Sigmoid colon (tissue), 7 donors: ENCODE measurements at regions of chr10 and their contacts with region 1.

Region 1: GRCh38 chr10:113854011-113854760 is at the starts of genes DCLRE1A and NHLRC2:
- DNase-seq: peak; percentile 89
- H3K4me3 ChIP-seq: peak within 1 kb of the TSS; percentile 64 to 84 (median 76)
- H3K27ac ChIP-seq: peak within 1 kb of the TSS; percentile 84 to 91 (median 88)
- H3K4me1 ChIP-seq: peaks cover 0 to 69% (median 42%) of the 10 kb centered on the region in 4 donors
- H3K27me3 ChIP-seq: no peaks in the 10 kb centered on the region
- CTCF ChIP-seq: no peak
- EP300 ChIP-seq: no peak
- POLR2A ChIP-seq: peak in 1 of 2 donors; percentile 5
- total RNA-seq, gene DCLRE1A: 4.8 to 7.5 (median 4.9) TPM
- total RNA-seq, gene NHLRC2: 31.0 to 67.8 (median 41.3) TPM

Region 2: DNA sequence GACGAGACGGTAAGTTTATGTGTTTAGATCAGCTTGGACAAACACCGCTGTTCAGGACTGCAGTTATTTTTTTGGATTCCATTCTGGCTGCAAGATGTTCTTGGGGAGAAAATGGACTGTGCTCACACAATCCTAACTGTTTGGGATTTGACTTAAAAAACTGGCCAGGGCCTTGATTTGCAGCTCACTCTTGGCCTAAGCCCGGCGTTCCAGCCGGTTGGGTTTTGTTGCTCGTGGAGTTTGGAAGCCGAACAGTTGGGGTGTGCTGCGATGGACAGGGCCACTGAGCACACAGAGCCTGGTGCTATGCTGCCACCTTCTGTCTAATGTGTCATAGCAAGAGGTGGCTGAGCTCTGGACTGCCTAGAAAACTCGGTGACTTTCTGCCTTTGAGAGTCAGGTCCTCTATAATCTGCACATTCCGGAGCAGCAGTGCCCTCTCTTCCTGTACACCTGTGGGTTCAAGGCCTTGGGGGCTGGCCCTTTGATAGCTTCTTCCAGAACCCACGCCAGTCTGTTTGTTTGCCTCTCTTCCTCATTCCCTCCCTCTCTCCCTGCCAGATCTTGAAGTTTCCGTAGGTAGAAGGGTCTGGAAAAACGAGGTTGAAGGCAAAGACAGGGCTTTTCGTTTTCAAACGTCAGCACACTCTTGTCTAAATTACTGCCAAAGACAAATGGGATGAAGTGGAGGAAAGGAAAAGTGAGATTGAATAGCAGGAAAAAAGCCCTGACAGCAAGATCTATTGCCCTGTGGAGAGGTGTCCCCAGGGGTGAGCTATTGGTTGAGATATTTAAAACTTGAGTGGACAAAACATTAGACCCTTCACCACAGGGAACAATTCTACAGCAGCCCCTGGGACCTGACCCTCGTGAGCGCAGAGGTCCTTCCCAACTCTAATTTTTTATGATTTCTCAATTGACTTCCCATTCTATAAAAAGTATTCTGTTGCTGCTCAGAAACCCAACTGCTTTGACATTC is 468.9 kb before region 1 on chr10:
- intact Hi-C with region 1: no loop called
- DNase-seq: peak; percentile 96
- H3K4me3 ChIP-seq: no peak overlapping the region
- H3K27ac ChIP-seq: peak overlapping the region; percentile 11 to 54 (median 42)
- H3K4me1 ChIP-seq: peaks cover 0 to 56% (median 34%) of the 10 kb centered on the region in 4 donors
- H3K27me3 ChIP-seq: no peaks in the 10 kb centered on the region
- CTCF ChIP-seq: peak; percentile 74 to 83 (median 80)
- EP300 ChIP-seq: no peak
- POLR2A ChIP-seq: no peak

Region 3: DNA sequence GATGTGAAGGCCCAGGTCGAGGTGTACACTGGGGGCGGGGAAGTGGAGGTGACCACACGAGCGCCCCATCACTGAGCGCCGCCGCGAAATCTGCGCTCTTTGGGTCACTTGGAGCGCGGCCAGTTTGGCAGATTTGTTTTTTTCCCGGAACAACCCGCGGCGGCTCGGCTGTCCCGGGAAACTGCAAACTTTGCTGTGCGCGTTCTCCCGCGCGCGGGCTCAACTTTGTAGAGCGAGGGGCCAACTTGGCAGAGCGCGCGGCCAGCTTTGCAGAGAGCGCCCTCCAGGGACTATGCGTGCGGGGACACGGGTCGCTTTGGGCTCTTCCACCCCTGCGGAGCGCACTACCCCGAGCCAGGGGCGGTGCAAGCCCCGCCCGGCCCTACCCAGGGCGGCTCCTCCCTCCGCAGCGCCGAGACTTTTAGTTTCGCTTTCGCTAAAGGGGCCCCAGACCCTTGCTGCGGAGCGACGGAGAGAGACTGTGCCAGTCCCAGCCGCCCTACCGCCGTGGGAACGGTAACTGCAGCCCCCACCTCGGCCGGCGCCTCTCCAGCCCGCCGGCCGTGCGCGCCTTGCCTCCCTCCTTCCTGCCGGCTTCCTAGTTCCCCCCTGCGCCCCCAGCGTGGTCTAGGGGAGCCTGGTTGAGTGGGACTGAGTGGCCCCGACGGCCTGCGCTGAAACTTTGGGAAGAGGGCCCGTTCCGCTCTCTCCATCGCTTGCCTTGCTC is 174.6 kb before region 1 on chr10 and contains the start of gene CASP7:
- intact Hi-C with region 1: loop called (anchors 5 kb)
- DNase-seq: peak; percentile 90
- H3K4me3 ChIP-seq: peak within 1 kb of the TSS; percentile 83 to 99 (median 94)
- H3K27ac ChIP-seq: peak within 1 kb of the TSS; percentile 96 to 98 (median 96)
- H3K4me1 ChIP-seq: peaks cover 2 to 22% (median 17%) of the 10 kb centered on the region in 4 donors
- H3K27me3 ChIP-seq: no peaks in the 10 kb centered on the region
- CTCF ChIP-seq: no peak
- EP300 ChIP-seq: no peak
- POLR2A ChIP-seq: peak; percentile 7 to 44
- total RNA-seq, gene CASP7: 11.4 to 17.8 (median 14.5) TPM

Region 4: GRCh38 chr10:113704637-113705343 is 149.4 kb before region 1 on chr10:
- intact Hi-C with region 1: loop called (anchors 5 kb)
- DNase-seq: no peak
- H3K4me3 ChIP-seq: no peak overlapping the region
- H3K27ac ChIP-seq: no peak overlapping the region
- H3K4me1 ChIP-seq: peaks cover 0 to 37% (median 26%) of the 10 kb centered on the region in 4 donors
- H3K27me3 ChIP-seq: no peaks in the 10 kb centered on the region
- CTCF ChIP-seq: peak in 3 of 4 experiments; percentile 55 to 63 (median 58)
- EP300 ChIP-seq: no peak
- POLR2A ChIP-seq: no peak

Region 5: DNA sequence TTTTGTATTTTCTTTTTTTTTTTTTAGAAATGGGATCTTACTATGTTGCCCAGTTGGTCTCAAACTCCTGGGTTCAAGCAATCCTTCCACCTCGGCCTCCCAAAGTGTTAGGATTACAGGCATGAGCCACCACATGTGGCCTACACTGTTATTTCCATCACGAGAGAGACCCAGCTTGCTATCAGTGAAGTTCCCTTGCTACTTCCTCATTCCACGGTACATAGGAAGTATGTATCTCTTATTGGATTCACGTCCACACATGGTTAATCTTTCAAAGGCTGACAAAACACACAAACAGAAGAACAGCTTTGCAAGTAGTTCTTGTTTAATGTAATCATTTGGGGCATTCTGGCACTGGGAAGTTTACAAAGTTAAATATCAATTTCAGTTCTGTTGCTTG is 51.2 kb before region 1 on chr10:
- intact Hi-C with region 1: loop called (anchors 2 kb)
- DNase-seq: no peak
- H3K4me3 ChIP-seq: no peak overlapping the region
- H3K27ac ChIP-seq: peak overlapping the region in 1 of 4 donors; percentile 29
- H3K4me1 ChIP-seq: peaks cover 0 to 25% (median 13%) of the 10 kb centered on the region in 4 donors
- H3K27me3 ChIP-seq: no peaks in the 10 kb centered on the region
- CTCF ChIP-seq: no peak
- EP300 ChIP-seq: no peak
- POLR2A ChIP-seq: no peak

Region 6: GRCh38 chr10:113897693-113898618 is 43.8 kb after region 1 on chr10:
- intact Hi-C with region 1: no loop called
- DNase-seq: no peak
- H3K4me3 ChIP-seq: no peak overlapping the region
- H3K27ac ChIP-seq: no peak overlapping the region
- H3K4me1 ChIP-seq: peaks cover 0 to 9% (median 2%) of the 10 kb centered on the region in 4 donors
- H3K27me3 ChIP-seq: no peaks in the 10 kb centered on the region
- CTCF ChIP-seq: no peak
- EP300 ChIP-seq: no peak
- POLR2A ChIP-seq: no peak

Region 7: DNA sequence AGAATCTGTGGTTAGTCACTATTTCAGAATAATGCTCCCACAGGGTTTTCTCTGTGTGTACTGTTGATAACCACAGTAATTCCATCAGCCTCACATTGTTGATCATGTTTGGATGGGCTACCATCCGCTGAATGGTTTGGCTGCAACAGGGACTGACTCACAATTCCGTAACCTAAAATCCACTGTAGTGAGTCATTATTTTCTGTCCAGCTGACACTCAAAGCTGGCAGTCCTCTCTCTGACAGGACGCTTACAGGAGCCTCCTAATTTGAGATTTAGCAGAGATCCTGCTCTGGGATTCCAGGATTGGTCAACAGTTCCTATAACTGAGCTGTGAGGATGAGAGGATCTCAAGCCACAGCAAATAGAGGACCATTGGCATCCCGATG is 417.6 kb after region 1 on chr10:
- intact Hi-C with region 1: no loop called
- DNase-seq: peak; percentile 82
- H3K4me3 ChIP-seq: no peak overlapping the region
- H3K27ac ChIP-seq: peak overlapping the region in 2 of 4 donors; percentile 27 to 40
- H3K4me1 ChIP-seq: peaks cover 0 to 15% (median 0%) of the 10 kb centered on the region in 4 donors
- H3K27me3 ChIP-seq: no peaks in the 10 kb centered on the region
- CTCF ChIP-seq: no peak
- EP300 ChIP-seq: no peak
- POLR2A ChIP-seq: no peak